ENCODE measurements at regions of chr11 and their contacts with region 1.

Region 1: DNA sequence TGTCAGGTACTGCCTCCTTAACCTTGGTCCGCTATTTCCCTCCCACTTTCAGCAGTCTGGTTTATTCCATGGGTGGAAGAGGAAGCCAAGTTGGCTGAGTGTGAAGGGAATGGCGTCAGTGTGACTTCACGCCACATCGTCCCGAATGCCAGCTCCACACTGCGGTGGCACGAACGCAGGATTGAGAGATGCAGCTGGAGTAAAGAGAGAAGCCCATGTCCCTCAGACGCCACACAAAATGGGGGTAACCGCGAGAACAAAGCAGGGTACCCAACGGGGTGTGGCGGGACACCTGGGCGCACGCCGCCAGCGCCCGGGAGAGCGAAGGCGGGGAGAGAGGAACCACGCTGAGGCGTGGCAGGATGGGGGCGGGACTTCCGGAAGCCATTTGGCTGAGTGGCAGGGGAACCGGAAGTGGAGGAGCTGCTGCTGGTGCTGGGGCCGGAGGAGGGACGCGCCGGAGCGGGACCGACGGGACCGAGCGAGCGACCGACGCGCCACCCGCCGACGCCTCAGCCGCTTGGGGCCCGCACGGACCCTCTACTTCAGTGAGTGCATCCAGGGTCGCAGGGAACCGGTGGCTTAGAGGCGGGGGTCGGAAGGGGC is at the start of gene PAFAH1B2:
- DNase-seq: peak; percentile 94
- H3K4me3 Mint-ChIP-seq: peak within 1 kb of the TSS; percentile 96
- H3K27ac Mint-ChIP-seq: peak within 1 kb of the TSS; percentile 82
- H3K4me1 Mint-ChIP-seq: peaks cover 11% of the 10 kb centered on the region
- H3K27me3 Mint-ChIP-seq: no peaks in the 10 kb centered on the region
- CTCF ChIP-seq: no peak
- total RNA-seq, gene PAFAH1B2: 146 and 174 TPM in 2 replicates

Region 2: GRCh38 chr11:117010808-117011540 is 133.0 kb before region 1 on chr11:
- CTCF ChIA-PET with region 1: no interaction called
- POLR2A ChIA-PET with region 1: interaction called, 10 read pairs
- intact Hi-C with region 1: no loop called
- DNase-seq: peak; percentile 90
- H3K4me3 Mint-ChIP-seq: peak overlapping the region; percentile 50
- H3K27ac Mint-ChIP-seq: peak overlapping the region; percentile 62
- H3K4me1 Mint-ChIP-seq: peaks cover 24% of the 10 kb centered on the region
- H3K27me3 Mint-ChIP-seq: no peaks in the 10 kb centered on the region
- CTCF ChIP-seq: no peak

Region 3: DNA sequence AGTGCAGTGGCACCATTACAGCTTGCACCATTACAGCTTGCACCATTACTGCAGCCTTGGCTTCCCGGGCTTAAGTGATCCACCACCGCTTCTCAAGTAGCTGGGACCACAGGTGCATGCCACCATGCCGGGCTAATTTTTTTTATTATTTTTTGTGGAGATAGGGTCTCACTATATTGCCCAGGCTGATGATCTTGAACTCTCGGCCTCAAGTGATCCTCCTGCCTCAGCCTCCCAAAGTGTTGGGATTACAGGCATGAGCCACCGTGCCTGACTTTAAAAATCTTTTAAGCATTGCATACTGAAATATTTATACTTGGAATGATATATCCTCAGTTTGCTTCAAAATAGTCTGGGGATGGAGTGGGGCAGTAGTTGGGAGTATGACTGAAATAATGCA is 10.5 kb after region 1 on chr11:
- CTCF ChIA-PET with region 1: interaction called, 6 read pairs
- POLR2A ChIA-PET with region 1: interaction called, 27 read pairs
- intact Hi-C with region 1: no loop called
- DNase-seq: no peak
- H3K4me3 Mint-ChIP-seq: no peak overlapping the region
- H3K27ac Mint-ChIP-seq: no peak overlapping the region
- H3K4me1 Mint-ChIP-seq: no peaks in the 10 kb centered on the region
- H3K27me3 Mint-ChIP-seq: no peaks in the 10 kb centered on the region
- CTCF ChIP-seq: no peak

Region 4: GRCh38 chr11:117170210-117170609 is 26.2 kb after region 1 on chr11:
- CTCF ChIA-PET with region 1: interaction called, 4 read pairs
- POLR2A ChIA-PET with region 1: interaction called, 27 read pairs
- intact Hi-C with region 1: no loop called
- DNase-seq: no peak
- H3K4me3 Mint-ChIP-seq: no peak overlapping the region
- H3K27ac Mint-ChIP-seq: no peak overlapping the region
- H3K4me1 Mint-ChIP-seq: peaks cover 13% of the 10 kb centered on the region
- H3K27me3 Mint-ChIP-seq: no peaks in the 10 kb centered on the region
- CTCF ChIP-seq: no peak

Region 5: DNA sequence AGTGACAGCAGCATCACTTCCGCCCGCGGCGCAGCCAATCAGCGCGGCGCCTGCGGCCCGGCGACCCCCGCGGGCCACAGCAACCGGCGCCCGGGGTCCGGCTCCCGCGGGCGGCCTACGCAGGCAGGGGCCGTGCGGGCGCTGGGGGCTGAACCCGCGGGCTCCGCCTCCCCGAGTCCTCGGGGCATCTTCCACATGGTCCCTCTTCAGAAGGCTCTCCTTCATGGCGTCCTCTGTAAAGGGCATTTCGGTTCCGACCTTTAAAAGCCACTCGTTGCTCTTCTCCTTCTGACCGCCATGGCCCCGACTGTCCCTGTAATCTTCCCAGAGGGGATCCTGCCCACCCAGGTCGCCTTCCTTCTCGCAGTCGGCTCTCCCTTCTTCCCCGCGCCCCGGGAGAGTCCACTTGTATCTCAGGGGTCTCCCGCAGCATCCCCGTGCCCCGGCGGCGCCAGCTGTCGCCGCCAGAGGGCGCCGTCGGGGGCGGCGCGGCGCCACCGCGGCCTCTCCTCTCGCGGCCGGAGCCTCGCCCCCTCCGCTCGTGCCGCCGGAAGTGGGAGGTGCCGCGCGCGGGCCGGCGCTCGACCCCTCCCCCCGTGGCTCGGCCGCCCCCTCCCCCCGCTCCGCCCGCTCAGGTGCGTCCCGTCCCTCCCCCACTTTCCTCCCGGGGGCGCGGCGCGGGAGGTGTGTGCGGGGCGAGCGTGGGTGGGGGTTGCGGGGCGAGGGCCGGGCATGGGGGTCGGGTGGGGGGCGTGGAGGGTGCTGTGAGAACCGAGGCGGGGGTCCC is 88.3 kb after region 1 on chr11 and contains the start of gene RNF214:
- CTCF ChIA-PET with region 1: no interaction called
- POLR2A ChIA-PET with region 1: interaction called, 37 read pairs
- intact Hi-C with region 1: no loop called
- DNase-seq: peak; percentile 68
- H3K4me3 Mint-ChIP-seq: peak within 1 kb of the TSS; percentile 94
- H3K27ac Mint-ChIP-seq: peak within 1 kb of the TSS; percentile 90
- H3K4me1 Mint-ChIP-seq: peaks cover 26% of the 10 kb centered on the region
- H3K27me3 Mint-ChIP-seq: no peaks in the 10 kb centered on the region
- CTCF ChIP-seq: peak; percentile 94
- total RNA-seq, gene RNF214: 23.3 TPM in 2 replicates